ENCODE measurements at regions of chr19 and their contacts with region 1.

Region 1: DNA sequence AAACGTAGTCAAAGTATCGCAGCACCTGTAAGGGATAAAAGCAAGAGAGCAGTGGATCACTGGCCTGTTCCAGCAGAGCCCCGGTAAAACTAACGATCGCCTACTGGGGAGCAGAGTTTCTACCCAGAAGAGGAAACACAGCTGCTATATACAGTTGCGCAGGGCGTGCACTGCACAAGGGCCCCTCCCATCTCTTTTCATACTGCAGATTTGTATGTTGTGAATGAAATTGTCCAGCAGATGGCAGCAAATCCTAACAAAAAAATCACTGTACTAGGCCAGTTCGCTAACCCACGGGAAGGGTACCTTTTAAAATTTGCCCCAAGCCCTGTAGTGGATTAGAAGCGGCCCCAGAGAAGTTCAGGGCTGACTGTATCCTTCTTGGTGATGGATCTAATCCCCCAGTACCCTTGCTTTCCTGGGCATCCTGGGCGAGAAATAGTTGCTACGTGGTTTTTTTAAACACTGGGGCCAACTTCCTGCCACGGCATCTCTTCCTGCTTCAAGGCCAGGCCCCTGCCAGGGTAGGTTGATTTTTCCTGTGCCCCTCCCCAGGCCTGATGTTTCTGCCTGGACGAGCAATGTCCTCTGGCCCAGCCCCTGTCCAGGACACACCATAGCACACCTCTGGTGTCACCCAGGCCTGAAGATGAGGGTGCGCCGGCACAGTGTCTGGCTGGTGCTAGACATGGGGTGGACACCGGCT is 127.0 kb downstream of the IER2 start:
- DNase-seq: peak in 3 of 10 donors; percentile 40 to 68 (median 67)
- H3K4me3 ChIP-seq: no peak overlapping the region
- H3K27ac ChIP-seq: peak overlapping the region in 32 of 59 donors; percentile 1 to 77 (median 50)
- H3K27me3 ChIP-seq: no peaks in the 10 kb centered on the region
- CTCF ChIP-seq: peak; percentile 56 to 94 (median 82)

Region 2: DNA sequence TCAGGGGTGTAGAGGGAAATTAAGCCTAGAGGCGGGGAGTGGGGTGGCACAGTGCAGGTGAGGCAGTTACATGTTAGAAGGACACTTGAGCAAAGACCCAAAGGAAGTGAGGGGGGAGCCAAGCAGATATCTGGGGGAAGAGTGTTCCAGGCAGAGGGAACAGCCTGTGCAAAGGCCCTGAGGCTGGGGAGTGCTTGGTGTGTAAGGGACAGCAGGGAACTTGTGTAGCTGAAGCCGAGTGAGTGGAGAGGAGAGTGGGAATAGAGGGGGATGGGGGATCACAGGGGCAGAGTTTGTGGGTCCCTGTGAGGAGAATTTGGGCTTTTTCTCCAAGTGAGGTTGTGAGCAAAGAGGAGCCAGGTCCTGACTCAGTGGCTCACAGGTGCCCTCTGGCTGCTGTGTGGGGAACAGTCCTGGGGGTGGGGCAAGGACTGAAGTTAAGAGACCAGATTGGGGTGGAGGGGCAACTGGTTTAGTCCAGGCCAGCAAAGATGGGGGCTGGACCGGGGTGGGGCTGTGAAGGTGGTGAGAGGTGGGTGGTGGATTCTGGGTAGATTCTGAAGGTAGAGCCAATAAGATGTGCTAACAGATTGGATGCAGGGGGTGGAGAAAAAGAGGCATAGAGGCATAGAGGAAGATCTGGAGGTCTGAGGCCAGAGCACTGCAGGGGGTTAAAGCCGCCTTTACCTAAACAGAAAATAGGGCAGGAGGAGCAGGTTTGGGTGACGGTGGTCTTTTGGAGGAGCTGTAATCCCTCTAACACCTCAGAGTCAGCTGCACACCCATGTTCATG is 153.7 kb after region 1 on chr19:
- intact Hi-C with region 1: loop called in 1 of 2 experiments (anchors 5 kb)
- DNase-seq: peak in 8 of 10 donors; percentile 36 to 66 (median 52)
- H3K4me3 ChIP-seq: no peak overlapping the region
- H3K27ac ChIP-seq: peak overlapping the region in 23 of 59 donors; percentile 12 to 93 (median 60)
- H3K27me3 ChIP-seq: no peaks in the 10 kb centered on the region
- CTCF ChIP-seq: peak in 54 of 56 donors; percentile 17 to 70 (median 56)

Region 3: GRCh38 chr19:13505761-13506470 is 228.7 kb after region 1 on chr19:
- intact Hi-C with region 1: loop called in 1 of 2 experiments (anchors 10 kb)
- DNase-seq: peak in 2 of 10 donors; percentile 46 to 51
- H3K4me3 ChIP-seq: peak overlapping the region; percentile 19 to 83 (median 68)
- H3K27ac ChIP-seq: peak overlapping the region in 58 of 59 donors; percentile 15 to 93 (median 81)
- H3K27me3 ChIP-seq: peaks cover 0 to 40% (median 4%) of the 10 kb centered on the region in 45 donors
- CTCF ChIP-seq: no peak

Region 4: DNA sequence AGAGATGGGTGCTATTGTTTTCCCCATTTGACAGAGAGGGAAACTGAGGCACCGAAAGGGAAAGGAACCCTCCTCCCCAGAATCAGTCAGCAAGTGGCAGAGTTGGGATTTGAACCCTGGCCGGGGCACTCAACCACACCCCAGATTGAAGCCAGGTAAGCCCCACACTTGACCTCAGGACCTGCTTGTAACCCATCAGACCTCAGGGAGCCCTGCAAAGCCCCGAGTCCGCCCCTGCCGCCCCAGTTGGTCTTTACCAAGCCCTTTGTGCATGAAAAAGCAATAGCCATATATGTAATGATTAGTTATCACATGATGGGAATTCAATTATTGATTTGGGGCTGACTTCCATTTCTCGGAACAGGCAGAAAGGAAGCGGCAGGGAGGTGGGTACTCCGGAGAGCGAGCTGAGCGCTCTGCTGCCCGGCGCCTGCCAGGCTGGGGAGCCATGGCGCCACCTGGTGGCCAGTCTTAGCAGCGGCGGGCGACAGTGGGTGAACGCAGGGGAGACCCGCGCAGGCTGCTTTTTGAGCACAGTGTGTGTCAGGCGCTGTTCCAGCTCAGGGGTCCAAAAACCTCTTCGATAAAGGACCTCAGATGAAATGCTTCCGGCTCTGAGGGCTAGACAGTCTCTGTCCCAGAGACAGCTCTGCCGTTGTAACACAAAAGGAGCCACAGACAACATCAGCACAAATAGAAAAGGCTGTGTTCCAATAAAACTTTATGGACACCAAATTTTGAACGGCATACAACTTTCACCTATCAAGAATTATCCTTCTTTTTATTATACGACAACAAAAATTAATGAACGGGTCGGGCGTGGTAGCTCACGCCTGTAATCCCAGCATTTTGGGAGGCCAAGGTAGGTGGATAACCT is 311.9 kb after region 1 on chr19:
- intact Hi-C with region 1: loop called (anchors 1 to 2 kb)
- DNase-seq: peak; percentile 55 to 88 (median 72)
- H3K4me3 ChIP-seq: peak overlapping the region in 36 of 59 donors; percentile 1 to 52 (median 28)
- H3K27ac ChIP-seq: no peak overlapping the region
- H3K27me3 ChIP-seq: peaks cover 0 to 4% (median 0%) of the 10 kb centered on the region in 45 donors
- CTCF ChIP-seq: peak; percentile 89 to 100 (median 99)

Region 5: DNA sequence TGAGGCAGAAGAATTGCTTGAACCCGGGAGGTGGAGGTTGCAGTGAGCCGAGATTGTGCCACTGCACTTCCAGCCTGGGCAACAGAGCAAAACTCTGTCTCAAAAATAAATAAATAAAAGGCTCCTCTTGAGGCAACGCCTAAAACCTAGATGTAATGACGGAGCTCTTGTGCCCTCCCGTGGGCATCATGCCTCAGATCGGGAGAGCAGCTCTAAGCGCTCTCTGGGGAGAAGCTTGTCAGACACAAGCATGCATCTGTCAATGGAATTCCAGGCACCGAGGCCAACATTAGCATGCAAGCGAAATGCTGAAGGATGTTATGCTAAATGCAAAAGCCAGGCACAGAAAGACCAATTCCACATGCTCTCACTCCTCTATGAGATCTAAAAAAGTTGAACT is 441.5 kb after region 1 on chr19:
- intact Hi-C with region 1: loop called in 1 of 2 experiments (anchors 5 kb)
- DNase-seq: peak; percentile 27 to 80 (median 74)
- H3K4me3 ChIP-seq: no peak overlapping the region
- H3K27ac ChIP-seq: no peak overlapping the region
- H3K27me3 ChIP-seq: no peaks in the 10 kb centered on the region
- CTCF ChIP-seq: peak in 54 of 56 donors; percentile 27 to 75 (median 55)

Region 6: DNA sequence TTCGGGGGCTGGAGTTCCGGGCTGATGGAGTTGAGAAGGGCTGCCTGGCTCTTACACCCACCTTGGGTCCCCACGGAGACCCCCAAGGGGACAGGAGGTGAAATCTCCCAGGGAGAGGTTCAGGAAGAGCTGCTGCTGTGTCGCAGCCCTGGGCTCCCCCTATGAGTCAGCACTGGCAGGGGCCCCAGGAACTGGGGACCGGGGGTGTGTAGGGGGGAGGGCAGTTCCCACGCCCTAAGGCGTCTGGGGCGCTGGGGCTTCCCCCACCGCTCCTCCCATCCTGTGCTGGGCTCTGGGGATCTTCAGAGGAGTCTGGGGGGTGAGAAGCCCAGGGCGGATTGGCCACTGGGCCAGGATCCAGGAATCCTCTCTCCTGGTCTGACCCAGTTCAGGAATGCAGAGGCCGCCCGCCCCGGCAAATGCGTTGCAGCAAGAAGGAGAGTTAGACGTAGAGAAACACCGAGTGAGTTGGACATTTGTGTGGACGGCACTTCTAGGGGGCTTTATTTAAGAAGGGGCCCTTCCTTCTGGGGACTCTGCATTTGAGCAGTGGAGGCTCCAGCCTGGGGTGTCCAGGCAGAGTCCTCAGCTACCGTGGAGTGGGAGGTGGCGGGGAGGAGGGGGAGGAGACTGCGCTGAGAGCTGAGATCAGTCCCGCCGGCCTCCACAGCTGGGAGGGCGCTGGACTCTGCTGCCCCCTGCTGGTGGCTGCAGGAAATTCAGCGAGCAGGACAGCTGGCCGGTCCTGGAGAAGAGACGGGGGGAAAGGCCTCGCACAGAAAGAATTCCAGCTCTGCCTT is 584.7 kb after region 1 on chr19:
- intact Hi-C with region 1: loop called in 1 of 2 experiments (anchors 10 kb)
- DNase-seq: peak; percentile 90 to 95 (median 92)
- H3K4me3 ChIP-seq: peak overlapping the region; percentile 13 to 71 (median 52)
- H3K27ac ChIP-seq: peak overlapping the region in 58 of 59 donors; percentile 4 to 93 (median 80)
- H3K27me3 ChIP-seq: no peaks in the 10 kb centered on the region
- CTCF ChIP-seq: peak; percentile 96 to 100 (median 99)

Measured in dorsolateral prefrontal cortex (tissue), 120 donors.